ENCODE measurements at regions of chr3 and their contacts with region 1.

Region 1: GRCh38 chr3:30199096-30199759 is 407.2 kb upstream of the TGFBR2 start:
- DNase-seq: peak; percentile 79
- ATAC-seq: peak; percentile 49
- H3K4me3 Mint-ChIP-seq: no peak overlapping the region
- H3K27ac Mint-ChIP-seq: no peak overlapping the region
- H3K4me1 Mint-ChIP-seq: no peaks in the 10 kb centered on the region
- H3K27me3 Mint-ChIP-seq: no peaks in the 10 kb centered on the region

Region 2: GRCh38 chr3:30012941-30013543 is 186.2 kb before region 1 on chr3:
- CTCF ChIA-PET with region 1: interaction called, 25 read pairs
- POLR2A ChIA-PET with region 1: no interaction called
- DNase-seq: peak; percentile 63
- ATAC-seq: no peak
- H3K4me3 Mint-ChIP-seq: no peak overlapping the region
- H3K27ac Mint-ChIP-seq: no peak overlapping the region
- H3K4me1 Mint-ChIP-seq: no peaks in the 10 kb centered on the region
- H3K27me3 Mint-ChIP-seq: peaks cover 4% of the 10 kb centered on the region

Region 3: DNA sequence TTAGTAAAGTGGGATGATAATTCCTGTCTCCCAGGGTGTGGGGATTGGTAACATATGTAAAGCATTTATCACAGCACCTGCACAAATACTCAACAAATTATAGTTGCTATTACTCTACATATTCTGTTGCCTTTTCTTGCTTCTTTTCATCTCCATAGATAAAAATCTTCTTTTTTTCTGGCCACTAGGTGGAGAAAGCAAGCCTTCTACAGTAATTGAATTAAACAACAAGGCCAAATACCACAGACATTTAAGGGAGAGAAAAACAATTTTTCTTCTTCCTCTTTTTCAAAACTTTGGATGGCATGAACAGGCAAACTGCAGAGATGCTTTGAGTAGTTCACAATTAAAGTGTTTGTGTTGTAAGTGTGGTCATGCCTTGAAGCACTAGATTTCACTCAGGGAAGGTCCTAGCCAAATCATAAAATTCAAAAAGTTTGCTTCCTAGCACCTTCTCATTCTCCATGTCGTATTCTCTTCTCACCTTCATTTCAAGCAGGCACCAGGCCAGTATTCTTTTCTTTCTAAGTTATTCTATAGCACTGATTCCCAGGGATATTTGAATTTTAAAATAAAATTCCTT is 86.2 kb before region 1 on chr3:
- CTCF ChIA-PET with region 1: interaction called, 37 read pairs
- POLR2A ChIA-PET with region 1: interaction called, 3 read pairs
- DNase-seq: no peak
- ATAC-seq: peak; percentile 44
- H3K4me3 Mint-ChIP-seq: no peak overlapping the region
- H3K27ac Mint-ChIP-seq: no peak overlapping the region
- H3K4me1 Mint-ChIP-seq: peaks cover 3% of the 10 kb centered on the region
- H3K27me3 Mint-ChIP-seq: no peaks in the 10 kb centered on the region

Region 4: DNA sequence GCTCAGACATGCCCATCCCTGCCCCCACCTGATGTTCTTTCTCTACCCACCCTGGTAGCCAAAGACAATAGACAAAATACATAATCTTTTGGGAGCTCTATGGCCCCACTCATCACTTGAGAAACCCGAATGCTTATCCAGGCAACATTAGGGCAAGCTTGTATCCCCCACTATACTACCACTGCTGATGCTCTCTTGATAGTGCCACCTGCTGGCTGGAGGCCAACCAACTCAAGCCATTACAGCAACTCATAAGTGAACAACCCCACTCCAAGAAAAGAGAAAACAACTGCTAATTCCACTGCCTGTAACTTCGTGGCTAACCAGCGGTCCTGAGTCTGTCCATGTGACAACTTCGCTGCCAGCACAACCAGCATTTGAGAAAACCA is 64.7 kb after region 1 on chr3:
- CTCF ChIA-PET with region 1: interaction called, 10 read pairs
- POLR2A ChIA-PET with region 1: no interaction called
- DNase-seq: no peak
- ATAC-seq: no peak
- H3K4me3 Mint-ChIP-seq: no peak overlapping the region
- H3K27ac Mint-ChIP-seq: peak overlapping the region; percentile 64
- H3K4me1 Mint-ChIP-seq: peaks cover 17% of the 10 kb centered on the region
- H3K27me3 Mint-ChIP-seq: no peaks in the 10 kb centered on the region

Region 5: DNA sequence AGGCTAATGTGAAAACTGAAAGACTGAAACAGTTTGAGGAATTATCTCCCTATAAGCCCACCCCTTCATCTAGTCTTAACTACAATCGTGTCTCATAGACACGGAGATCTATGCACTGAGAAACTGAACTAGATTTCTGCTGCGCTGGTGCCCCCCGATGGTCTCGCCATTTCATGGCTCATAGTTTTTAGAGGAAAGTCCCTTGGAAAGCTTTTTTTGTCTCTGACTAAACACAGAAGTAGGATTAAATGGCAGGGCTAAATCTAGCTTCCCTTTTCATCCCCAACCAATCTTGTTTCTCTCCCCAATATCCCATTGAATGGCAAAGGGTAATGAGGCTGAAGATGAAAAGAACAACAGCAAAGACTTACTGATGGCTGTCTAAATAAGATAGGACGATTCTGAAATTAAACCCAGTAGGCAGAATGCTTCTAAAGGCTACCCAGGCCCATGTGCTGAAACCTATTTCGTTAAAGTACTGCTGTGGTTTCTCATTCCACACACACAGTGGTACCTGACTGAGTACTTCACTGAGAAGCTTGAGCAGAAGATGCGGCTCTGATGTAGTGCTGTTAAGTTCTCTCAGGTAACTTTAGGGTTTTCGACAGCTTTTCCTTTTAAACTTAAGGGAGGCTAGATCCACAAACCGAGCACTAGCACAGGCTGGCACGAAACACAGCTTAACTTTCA is 552.5 kb after region 1 on chr3:
- CTCF ChIA-PET with region 1: interaction called, 44 read pairs
- POLR2A ChIA-PET with region 1: no interaction called
- DNase-seq: peak; percentile 70
- ATAC-seq: peak; percentile 79
- H3K4me3 Mint-ChIP-seq: no peak overlapping the region
- H3K27ac Mint-ChIP-seq: no peak overlapping the region
- H3K4me1 Mint-ChIP-seq: peaks cover 13% of the 10 kb centered on the region
- H3K27me3 Mint-ChIP-seq: no peaks in the 10 kb centered on the region

Measured in activated CD8-positive, alpha-beta T cell treated with anti-CD3 and anti-CD28 coated beads, Interleukin-2, amount 10 ng/mL, durations not matched to agents 7 days and 5 days (primary cell).